Aorta (tissue), 5 donors: ENCODE measurements at regions of chr12 and their contacts with region 1.

Region 1: DNA sequence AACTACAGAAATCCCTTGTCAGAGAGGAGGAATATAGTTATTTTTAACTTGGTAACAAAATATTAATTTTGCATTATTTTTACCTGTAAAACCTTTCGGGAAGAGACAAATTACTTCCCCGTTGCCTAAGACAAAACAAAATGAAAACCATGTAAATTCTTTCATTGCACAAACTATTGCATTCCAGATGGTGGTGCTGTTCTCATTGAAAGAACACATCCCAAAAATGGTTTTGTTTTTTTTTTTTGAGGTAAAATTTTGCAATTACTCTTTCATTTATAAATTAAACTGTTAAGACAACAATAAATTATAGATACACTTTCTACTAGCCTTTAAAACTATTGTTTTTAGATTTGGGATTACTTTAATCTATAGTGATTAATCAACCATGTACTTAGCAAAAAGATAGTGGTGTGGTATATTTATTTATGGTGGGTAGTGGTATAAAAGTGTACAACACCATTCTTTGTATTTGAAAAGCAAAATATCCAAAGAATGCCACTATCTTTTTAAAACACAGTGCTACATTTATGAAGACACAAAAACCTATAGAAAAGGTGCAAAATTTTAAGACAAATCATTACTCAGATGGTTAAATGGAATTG is 115.5 kb downstream of the SLC38A1 start:
- DNase-seq: no peak
- ATAC-seq: no peak
- H3K4me3 ChIP-seq: no peak overlapping the region
- H3K27ac ChIP-seq: no peak overlapping the region
- H3K4me1 ChIP-seq: peaks cover 0 to 3% of the 10 kb centered on the region in 2 donors
- H3K27me3 ChIP-seq: no peaks in the 10 kb centered on the region

Region 2: DNA sequence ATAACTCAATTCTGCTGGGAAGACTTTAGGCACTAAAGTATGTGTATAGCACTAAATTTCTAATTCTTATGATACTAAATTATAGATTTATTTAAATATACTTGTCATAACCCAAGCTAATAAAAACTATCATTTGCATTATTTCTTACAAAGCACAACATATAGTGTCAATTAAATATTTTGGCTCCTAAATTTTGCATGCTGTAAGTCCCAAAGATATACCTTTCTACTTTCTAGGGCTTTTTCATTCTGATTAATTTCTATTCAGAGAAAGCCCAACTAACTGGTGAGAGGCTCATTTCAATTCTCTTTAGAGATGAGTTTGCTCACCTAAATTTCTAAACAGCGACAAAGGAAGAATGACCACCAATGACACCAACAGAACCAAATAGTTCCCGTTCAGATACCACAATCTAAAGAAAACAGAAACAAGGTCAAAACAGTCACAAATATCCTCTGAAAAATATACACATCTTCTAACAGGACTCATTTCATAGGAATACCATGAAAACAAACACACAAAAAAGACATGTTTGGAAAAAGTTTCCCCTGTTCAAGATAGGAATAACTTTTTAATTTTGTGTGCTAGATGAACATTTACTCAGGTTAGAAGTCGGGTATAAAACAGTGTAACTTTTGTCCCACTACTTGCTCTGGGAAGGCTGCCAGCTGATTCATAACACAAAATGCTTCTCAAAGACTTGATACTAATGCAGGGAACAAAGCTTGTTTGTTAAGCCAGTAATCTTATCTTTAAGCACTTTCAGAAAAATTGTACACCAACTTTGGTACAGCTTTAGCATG is 211.6 kb after region 1 on chr12:
- intact Hi-C with region 1: loop called in 1 of 2 experiments (anchors 10 kb)
- DNase-seq: peak in 1 of 2 donors; percentile 48
- ATAC-seq: peak; percentile 47
- H3K4me3 ChIP-seq: peak overlapping the region in 1 of 2 donors; percentile 34
- H3K27ac ChIP-seq: no peak overlapping the region
- H3K4me1 ChIP-seq: peaks cover 9% of the 10 kb centered on the region in 2 donors
- H3K27me3 ChIP-seq: no peaks in the 10 kb centered on the region